Endothelial cell of umbilical vein (primary cell): ENCODE measurements at regions of chr6 and their contacts with region 1.

Region 1: GRCh38 chr6:13614926-13615798 is at the start of gene NOL7:
- DNase-seq: peak; percentile 98
- H3K4me3 ChIP-seq: peak within 1 kb of the TSS; percentile 89 to 99 (median 98)
- H3K27ac ChIP-seq: peak within 1 kb of the TSS; percentile 78
- H3K4me1 ChIP-seq: peaks cover 17% of the 10 kb centered on the region
- H3K27me3 ChIP-seq: no peaks in the 10 kb centered on the region
- CTCF ChIP-seq: peak; percentile 97 to 98
- POLR2A ChIP-seq: peak; percentile 67
- total RNA-seq, gene NOL7: 75.6 and 80.0 TPM in 2 replicates

Region 2: GRCh38 chr6:12957321-12958051 is 657.7 kb before region 1 on chr6:
- CTCF ChIA-PET with region 1: no interaction called
- POLR2A ChIA-PET with region 1: no interaction called
- dilution Hi-C with region 1: no loop called
- intact Hi-C with region 1: loop called (anchors 1 kb)
- DNase-seq: peak; percentile 76
- H3K4me3 ChIP-seq: peak overlapping the region; percentile 18 to 85 (median 50)
- H3K27ac ChIP-seq: peak overlapping the region; percentile 56
- H3K4me1 ChIP-seq: peaks cover 14% of the 10 kb centered on the region
- H3K27me3 ChIP-seq: no peaks in the 10 kb centered on the region
- CTCF ChIP-seq: peak in 1 of 2 donors; percentile 3
- POLR2A ChIP-seq: no peak

Region 3: GRCh38 chr6:13302751-13303667 is 312.2 kb before region 1 on chr6:
- CTCF ChIA-PET with region 1: interaction called, 11 read pairs
- POLR2A ChIA-PET with region 1: no interaction called
- dilution Hi-C with region 1: no loop called
- intact Hi-C with region 1: loop called (anchors 1 kb)
- DNase-seq: peak; percentile 93
- H3K4me3 ChIP-seq: peak overlapping the region in 1 of 3 experiments; percentile 15
- H3K27ac ChIP-seq: peak overlapping the region; percentile 86
- H3K4me1 ChIP-seq: peaks cover 36% of the 10 kb centered on the region
- H3K27me3 ChIP-seq: no peaks in the 10 kb centered on the region
- CTCF ChIP-seq: no peak
- POLR2A ChIP-seq: no peak

Region 4: GRCh38 chr6:13427801-13428582 is 187.2 kb before region 1 on chr6:
- CTCF ChIA-PET with region 1: no interaction called
- POLR2A ChIA-PET with region 1: no interaction called
- dilution Hi-C with region 1: no loop called
- intact Hi-C with region 1: no loop called
- DNase-seq: peak; percentile 61
- H3K4me3 ChIP-seq: no peak overlapping the region
- H3K27ac ChIP-seq: no peak overlapping the region
- H3K4me1 ChIP-seq: peaks cover 19% of the 10 kb centered on the region
- H3K27me3 ChIP-seq: no peaks in the 10 kb centered on the region
- CTCF ChIP-seq: peak; percentile 10 to 50
- POLR2A ChIP-seq: no peak

Region 5: DNA sequence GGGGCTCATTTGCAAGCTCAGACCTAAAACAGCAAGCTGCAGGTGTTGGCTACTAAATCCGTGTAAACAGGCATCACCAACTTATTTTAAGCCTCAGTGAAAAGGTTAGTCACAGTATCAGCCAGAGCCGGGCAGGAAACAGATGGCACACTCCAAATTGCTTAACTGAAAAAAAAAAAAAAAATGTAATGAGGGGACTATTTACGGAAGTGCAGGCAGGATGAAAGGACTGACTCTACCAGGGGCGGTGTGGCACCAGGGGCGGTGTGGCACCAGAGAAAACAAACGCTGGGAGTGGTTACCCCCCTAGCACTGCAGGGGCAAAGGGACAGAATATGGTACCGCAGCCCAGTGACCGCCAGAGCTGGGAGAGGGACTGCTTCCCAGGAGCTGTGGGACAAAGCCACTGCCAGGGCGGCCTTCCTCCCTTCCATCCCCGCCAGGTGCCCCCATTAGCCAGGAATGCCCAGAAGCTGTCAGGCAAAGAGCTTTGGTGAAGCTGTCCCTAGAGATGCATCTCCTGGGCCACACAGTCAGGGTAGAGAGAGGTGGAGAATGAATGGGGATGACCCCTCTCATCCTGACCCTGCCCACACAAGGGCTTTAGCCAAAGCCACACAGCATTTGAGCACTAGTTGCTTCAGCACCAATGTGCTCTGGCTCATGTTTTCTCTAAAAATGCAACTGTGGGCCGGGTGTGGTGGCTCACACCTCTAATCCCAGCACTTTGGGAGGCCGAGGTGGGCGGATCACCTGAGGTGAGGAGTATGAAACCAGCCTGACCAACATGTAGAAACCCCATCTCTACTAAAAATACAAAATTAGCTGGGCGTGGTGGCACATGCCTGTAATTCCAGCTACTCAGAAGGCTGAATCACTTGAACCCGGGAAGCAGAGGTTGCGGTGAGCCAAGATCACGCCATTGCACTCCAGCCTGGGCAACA is 88.2 kb before region 1 on chr6:
- CTCF ChIA-PET with region 1: no interaction called
- POLR2A ChIA-PET with region 1: no interaction called
- dilution Hi-C with region 1: no loop called
- intact Hi-C with region 1: loop called (anchors 2 kb)
- DNase-seq: peak; percentile 94
- H3K4me3 ChIP-seq: no peak overlapping the region
- H3K27ac ChIP-seq: peak overlapping the region; percentile 65
- H3K4me1 ChIP-seq: peaks cover 37% of the 10 kb centered on the region
- H3K27me3 ChIP-seq: no peaks in the 10 kb centered on the region
- CTCF ChIP-seq: no peak
- POLR2A ChIP-seq: peak; percentile 63

Region 6: GRCh38 chr6:13814176-13814937 is 199.2 kb after region 1 on chr6 and contains the start of gene MCUR1:
- CTCF ChIA-PET with region 1: no interaction called
- POLR2A ChIA-PET with region 1: no interaction called
- dilution Hi-C with region 1: no loop called
- intact Hi-C with region 1: loop called (anchors 1 kb)
- DNase-seq: peak; percentile 84
- H3K4me3 ChIP-seq: peak within 1 kb of the TSS; percentile 70 to 94 (median 84)
- H3K27ac ChIP-seq: peak within 1 kb of the TSS; percentile 70
- H3K4me1 ChIP-seq: peaks cover 10% of the 10 kb centered on the region
- H3K27me3 ChIP-seq: no peaks in the 10 kb centered on the region
- CTCF ChIP-seq: peak in 1 of 2 donors; percentile 16
- POLR2A ChIP-seq: peak; percentile 75
- total RNA-seq, gene MCUR1: 18.5 and 21.2 TPM in 2 replicates